ENCODE measurements at regions of chr2 and their contacts with region 1.

Region 1: GRCh38 chr2:136423516-136423996 is 305.6 kb upstream of the CXCR4 start:
- DNase-seq: peak; percentile 71 to 92
- H3K4me3 ChIP-seq: peak overlapping the region in 1 of 4 experiments; percentile 46; a peak in 3 of 8 replicates
- H3K27ac ChIP-seq: no peak overlapping the region
- H3K4me1 ChIP-seq: no peaks in the 10 kb centered on the region
- H3K27me3 ChIP-seq: peaks cover 1 to 16% (median 13%) of the 10 kb centered on the region in 4 experiments
- CTCF ChIP-seq: peak; percentile 84 to 91 (median 90)
- EP300 ChIP-seq: no peak
- POLR2A ChIP-seq: no peak
- RAD21 ChIP-seq: peak; percentile 94 to 98

Region 2: GRCh38 chr2:136439073-136439676 is 15.6 kb after region 1 on chr2:
- CTCF ChIA-PET with region 1: interaction called, 19 read pairs
- POLR2A ChIA-PET with region 1: no interaction called
- DNase-seq: no peak
- H3K4me3 ChIP-seq: no peak overlapping the region
- H3K27ac ChIP-seq: no peak overlapping the region
- H3K4me1 ChIP-seq: peaks cover 0 to 19% (median 8%) of the 10 kb centered on the region in 4 experiments
- H3K27me3 ChIP-seq: no peaks in the 10 kb centered on the region; a peak in 1 of 7 replicates
- CTCF ChIP-seq: no peak
- EP300 ChIP-seq: no peak
- POLR2A ChIP-seq: no peak
- RAD21 ChIP-seq: no peak

Region 3: GRCh38 chr2:136444323-136444722 is 20.8 kb after region 1 on chr2:
- CTCF ChIA-PET with region 1: interaction called, 19 read pairs
- POLR2A ChIA-PET with region 1: no interaction called
- DNase-seq: no peak
- H3K4me3 ChIP-seq: no peak overlapping the region
- H3K27ac ChIP-seq: no peak overlapping the region
- H3K4me1 ChIP-seq: peaks cover 2 to 15% (median 10%) of the 10 kb centered on the region in 4 experiments; a peak in 5 of 7 replicates
- H3K27me3 ChIP-seq: no peaks in the 10 kb centered on the region; a peak in 1 of 7 replicates
- CTCF ChIP-seq: no peak
- EP300 ChIP-seq: no peak
- POLR2A ChIP-seq: no peak
- RAD21 ChIP-seq: no peak

Region 4: DNA sequence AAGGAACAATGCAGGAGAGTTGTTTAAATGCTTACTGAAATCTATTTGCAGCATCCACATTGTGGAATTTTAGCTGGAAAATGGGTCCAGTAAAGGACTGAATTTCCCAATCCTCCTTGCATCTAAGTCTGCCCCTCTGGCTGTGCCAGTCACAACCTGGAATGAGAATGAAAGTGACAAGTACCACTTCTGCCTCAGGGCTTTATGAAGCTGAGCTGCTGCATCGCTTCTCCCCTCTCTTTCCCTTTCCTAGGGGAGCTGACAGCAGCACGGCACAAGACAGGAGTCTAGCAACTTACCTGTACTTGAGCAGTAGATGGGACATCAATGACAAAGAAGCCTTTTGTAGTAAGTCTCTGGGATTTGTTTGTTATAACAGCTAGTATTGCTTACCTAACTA is 314.5 kb after region 1 on chr2:
- CTCF ChIA-PET with region 1: interaction called, 29 read pairs
- POLR2A ChIA-PET with region 1: interaction called, 4 read pairs
- DNase-seq: no peak
- H3K4me3 ChIP-seq: no peak overlapping the region
- H3K27ac ChIP-seq: no peak overlapping the region
- H3K4me1 ChIP-seq: no peaks in the 10 kb centered on the region
- H3K27me3 ChIP-seq: no peaks in the 10 kb centered on the region
- CTCF ChIP-seq: no peak
- EP300 ChIP-seq: no peak
- POLR2A ChIP-seq: no peak
- RAD21 ChIP-seq: no peak

Measured in H1 (cell line).